ENCODE measurements at regions of chr5 and their contacts with region 1.

Region 1: DNA sequence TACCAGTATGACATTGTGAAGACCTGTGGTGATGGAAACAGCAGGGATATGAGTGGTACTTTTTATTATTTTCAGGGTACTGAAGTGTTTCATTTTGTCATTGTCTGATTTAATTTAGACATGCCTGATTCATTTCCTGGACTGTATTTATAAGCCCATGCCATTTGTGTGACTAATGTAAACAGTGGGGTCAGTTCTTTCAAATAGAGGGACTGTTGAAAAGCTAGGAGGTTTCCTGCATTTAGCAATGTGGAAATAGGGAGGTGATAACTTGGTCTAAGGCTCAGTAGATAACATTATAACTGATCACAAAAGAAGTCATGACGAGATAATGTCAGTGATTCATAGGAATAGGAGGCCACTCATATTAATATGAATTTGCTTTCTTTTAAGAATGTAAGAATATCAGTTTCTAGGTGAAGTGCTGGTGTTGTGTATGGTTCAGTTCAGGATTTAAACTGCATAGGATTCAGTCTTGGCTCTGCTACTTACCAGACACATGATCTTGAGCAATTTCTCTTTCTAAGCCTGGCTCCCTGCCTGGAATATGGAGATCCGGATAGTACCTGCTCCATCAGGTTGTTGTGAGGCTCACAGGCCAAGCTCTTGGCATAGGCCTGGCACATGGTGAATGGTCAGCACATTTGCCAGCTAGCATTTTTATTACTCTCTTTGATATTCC is 7.5 kb downstream of the RASGRF2 start:
- DNase-seq: peak; percentile 94
- H3K4me3 ChIP-seq: no peak overlapping the region
- H3K27ac ChIP-seq: peak overlapping the region; percentile 75
- H3K4me1 ChIP-seq: peaks cover 44% of the 10 kb centered on the region
- H3K27me3 ChIP-seq: no peaks in the 10 kb centered on the region
- CTCF ChIP-seq: no peak
- POLR2A ChIP-seq: peak; percentile 51

Region 2: DNA sequence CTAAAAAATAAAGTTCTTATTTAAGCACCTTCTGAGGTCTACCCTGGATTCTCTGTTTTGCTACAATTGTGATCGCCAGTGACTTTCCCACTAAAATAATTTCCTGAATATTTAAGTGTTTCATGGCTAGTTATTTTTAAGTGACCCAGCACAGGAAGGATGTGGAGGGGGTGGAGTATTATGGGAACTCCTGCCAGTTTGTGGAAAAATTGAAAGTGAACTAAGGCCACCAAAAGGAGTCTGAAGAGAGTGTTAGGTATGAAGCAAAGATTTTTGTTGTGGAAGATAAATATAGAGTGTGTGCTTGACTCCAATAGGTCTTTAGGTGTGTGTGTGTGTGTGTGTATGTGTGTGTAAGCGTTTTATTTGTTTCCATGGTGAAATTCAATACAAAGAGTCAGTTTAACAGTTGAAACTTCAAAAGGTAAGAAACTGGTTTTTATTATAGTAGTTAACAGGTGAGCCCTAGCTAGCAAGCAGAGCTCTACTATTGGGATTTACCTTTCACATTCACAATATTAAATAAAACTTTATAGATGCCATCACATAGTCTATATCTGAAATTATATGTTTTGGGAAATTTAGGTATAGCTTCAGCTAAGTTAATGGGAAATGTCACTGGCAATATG is 18.1 kb after region 1 on chr5:
- CTCF ChIA-PET with region 1: interaction called, 3 read pairs
- POLR2A ChIA-PET with region 1: no interaction called
- dilution Hi-C with region 1: no loop called
- intact Hi-C with region 1: loop called (anchors 2 kb)
- DNase-seq: peak; percentile 88
- H3K4me3 ChIP-seq: peak overlapping the region in 1 of 3 experiments; percentile 27
- H3K27ac ChIP-seq: peak overlapping the region; percentile 53
- H3K4me1 ChIP-seq: peaks cover 11% of the 10 kb centered on the region
- H3K27me3 ChIP-seq: no peaks in the 10 kb centered on the region
- CTCF ChIP-seq: no peak
- POLR2A ChIP-seq: no peak

Region 3: DNA sequence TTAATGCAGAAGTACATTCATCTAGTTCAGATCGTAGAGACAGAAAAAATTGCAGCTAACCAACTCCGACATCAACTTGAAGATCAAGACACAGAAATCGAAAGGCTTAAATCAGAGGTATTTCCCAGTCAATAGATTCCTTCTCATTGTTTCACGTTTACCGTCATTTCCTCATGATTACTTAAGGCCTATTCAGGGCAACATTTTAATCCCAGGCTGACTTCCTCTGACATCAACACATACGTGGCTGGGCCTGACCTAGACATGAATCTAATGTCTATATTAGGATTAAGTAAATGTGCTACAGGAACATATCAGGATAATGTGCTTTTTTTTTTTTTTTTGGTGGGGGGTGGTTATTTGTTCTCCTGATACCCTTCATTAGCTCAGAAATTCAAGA is 100.4 kb after region 1 on chr5:
- CTCF ChIA-PET with region 1: no interaction called
- POLR2A ChIA-PET with region 1: no interaction called
- dilution Hi-C with region 1: no loop called
- intact Hi-C with region 1: loop called (anchors 1 kb)
- DNase-seq: peak; percentile 59
- H3K4me3 ChIP-seq: no peak overlapping the region
- H3K27ac ChIP-seq: peak overlapping the region; percentile 54
- H3K4me1 ChIP-seq: peaks cover 8% of the 10 kb centered on the region
- H3K27me3 ChIP-seq: no peaks in the 10 kb centered on the region
- CTCF ChIP-seq: no peak
- POLR2A ChIP-seq: no peak